ENCODE measurements at regions of chr10 and their contacts with region 1.

Region 1: GRCh38 chr10:70363971-70364771 is 18.3 kb downstream of the LRRC20 start:
- DNase-seq: peak; percentile 90
- ATAC-seq: peak; percentile 99
- H3K4me3 Mint-ChIP-seq: no peak overlapping the region
- H3K27ac Mint-ChIP-seq: no peak overlapping the region
- H3K4me1 Mint-ChIP-seq: peaks cover 9% of the 10 kb centered on the region
- H3K27me3 Mint-ChIP-seq: no peaks in the 10 kb centered on the region
- CTCF ChIP-seq: peak; percentile 87

Region 2: GRCh38 chr10:70192315-70192968 is 171.7 kb before region 1 on chr10:
- CTCF ChIA-PET with region 1: interaction called, 18 read pairs
- POLR2A ChIA-PET with region 1: no interaction called
- intact Hi-C with region 1: no loop called
- DNase-seq: no peak
- ATAC-seq: no peak
- H3K4me3 Mint-ChIP-seq: no peak overlapping the region
- H3K27ac Mint-ChIP-seq: no peak overlapping the region
- H3K4me1 Mint-ChIP-seq: peaks cover 6% of the 10 kb centered on the region
- H3K27me3 Mint-ChIP-seq: no peaks in the 10 kb centered on the region
- CTCF ChIP-seq: no peak

Region 3: GRCh38 chr10:70221030-70221429 is 143.1 kb before region 1 on chr10:
- CTCF ChIA-PET with region 1: interaction called, 321 read pairs
- POLR2A ChIA-PET with region 1: interaction called, 15 read pairs
- intact Hi-C with region 1: loop called (anchors 1 kb)
- DNase-seq: no peak
- ATAC-seq: no peak
- H3K4me3 Mint-ChIP-seq: no peak overlapping the region
- H3K27ac Mint-ChIP-seq: peak overlapping the region; percentile 47
- H3K4me1 Mint-ChIP-seq: peaks cover 31% of the 10 kb centered on the region
- H3K27me3 Mint-ChIP-seq: no peaks in the 10 kb centered on the region
- CTCF ChIP-seq: no peak

Region 4: DNA sequence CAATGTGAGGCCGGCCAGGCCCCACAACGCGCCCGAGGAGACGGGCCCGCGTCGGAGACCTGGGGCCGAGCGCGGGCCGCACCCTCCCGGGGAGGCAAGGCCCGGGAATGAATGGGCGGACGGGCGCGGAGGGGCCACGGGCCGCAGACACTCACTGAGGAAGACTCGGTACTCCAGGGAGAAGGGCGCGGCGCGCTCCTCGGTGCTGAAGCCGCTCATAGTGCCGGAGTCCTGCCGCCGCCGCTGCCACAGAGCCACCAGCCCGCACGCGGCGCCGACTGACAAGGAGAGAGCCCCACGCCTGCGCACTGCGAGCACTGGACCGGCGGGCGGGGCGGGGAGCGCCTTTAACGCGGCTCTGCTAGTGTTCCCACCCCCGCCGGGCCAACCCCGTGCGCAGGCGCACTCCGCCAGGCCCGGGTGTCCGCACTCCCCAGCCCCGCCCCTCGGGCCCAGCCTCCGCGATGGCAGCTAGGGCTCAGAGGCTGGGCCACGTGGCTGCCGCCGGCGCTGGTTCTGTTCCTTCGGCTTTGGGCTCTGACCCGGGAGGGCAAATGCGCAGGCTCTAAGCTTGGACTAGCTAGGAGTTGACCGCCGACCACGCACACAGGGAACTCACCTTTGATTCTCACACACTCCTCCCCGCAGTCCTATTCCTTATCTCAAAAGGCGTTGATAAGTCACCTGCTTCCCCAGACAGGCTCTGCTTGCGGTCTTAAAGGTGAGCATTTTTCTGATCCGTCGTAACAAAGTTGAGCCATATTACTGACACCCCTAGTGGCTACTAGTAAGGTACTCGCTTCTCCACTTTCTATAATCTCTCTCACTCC is 130.8 kb before region 1 on chr10 and contains the start of gene PPA1:
- CTCF ChIA-PET with region 1: interaction called, 321 read pairs
- POLR2A ChIA-PET with region 1: interaction called, 10 read pairs
- intact Hi-C with region 1: no loop called
- DNase-seq: peak; percentile 99
- ATAC-seq: peak; percentile 94
- H3K4me3 Mint-ChIP-seq: peak within 1 kb of the TSS; percentile 80
- H3K27ac Mint-ChIP-seq: peak within 1 kb of the TSS; percentile 94
- H3K4me1 Mint-ChIP-seq: peaks cover 42% of the 10 kb centered on the region
- H3K27me3 Mint-ChIP-seq: no peaks in the 10 kb centered on the region
- CTCF ChIP-seq: no peak
- total RNA-seq, gene PPA1: 357 to 368 TPM

Region 5: DNA sequence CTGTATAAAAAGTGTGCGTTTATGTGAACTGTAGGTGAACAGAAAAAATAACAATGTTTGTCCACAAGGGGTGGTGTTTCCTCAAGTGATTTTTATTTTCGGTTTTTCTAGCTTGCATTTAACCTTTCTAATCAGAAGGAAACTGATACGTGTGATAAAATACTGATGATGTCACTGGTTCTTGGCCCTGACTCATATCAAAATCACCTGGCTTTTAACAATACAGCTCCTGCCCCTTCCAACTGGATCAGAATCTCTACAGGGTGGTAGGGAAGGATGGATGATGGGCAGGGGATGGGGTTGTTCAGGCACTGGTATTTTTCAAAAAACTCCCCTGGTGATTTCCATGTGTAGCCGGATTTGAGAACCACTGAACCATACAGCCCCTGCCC is 91.2 kb before region 1 on chr10:
- CTCF ChIA-PET with region 1: interaction called, 48 read pairs
- POLR2A ChIA-PET with region 1: no interaction called
- intact Hi-C with region 1: no loop called
- DNase-seq: peak; percentile 20
- ATAC-seq: peak; percentile 91
- H3K4me3 Mint-ChIP-seq: no peak overlapping the region
- H3K27ac Mint-ChIP-seq: peak overlapping the region; percentile 52
- H3K4me1 Mint-ChIP-seq: peaks cover 14% of the 10 kb centered on the region
- H3K27me3 Mint-ChIP-seq: no peaks in the 10 kb centered on the region
- CTCF ChIP-seq: peak; percentile 72

Region 6: DNA sequence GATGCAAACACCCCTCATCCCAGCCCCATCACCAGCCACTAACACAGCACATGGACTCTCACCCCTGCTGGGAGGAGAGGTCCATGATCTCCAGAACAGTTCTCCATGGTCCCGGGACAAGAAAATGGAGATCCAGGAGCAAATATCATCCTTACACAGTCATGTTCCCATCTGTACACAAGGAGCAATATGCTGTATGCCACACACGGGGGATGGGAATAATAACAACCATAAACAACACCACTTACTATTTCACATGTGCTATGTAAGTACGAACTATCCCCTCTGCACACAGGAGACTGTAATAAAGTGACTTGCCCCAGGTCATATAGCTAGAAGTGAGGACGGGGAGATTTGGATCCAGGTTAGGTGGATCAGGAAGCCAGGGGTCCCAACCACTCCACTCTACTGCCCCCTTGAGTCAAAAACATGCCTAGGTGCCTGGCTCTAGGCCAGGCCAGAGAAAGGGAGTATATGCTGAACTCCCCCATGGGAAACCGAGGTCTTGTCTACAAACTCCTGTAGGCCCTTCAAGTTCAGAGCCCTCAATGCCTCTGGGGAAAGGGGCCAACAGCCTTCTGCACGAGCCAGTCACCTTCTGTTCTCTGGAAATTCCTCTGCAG is 15.8 kb before region 1 on chr10:
- CTCF ChIA-PET with region 1: interaction called, 43 read pairs
- POLR2A ChIA-PET with region 1: no interaction called
- intact Hi-C with region 1: no loop called
- DNase-seq: peak; percentile 63
- ATAC-seq: peak; percentile 87
- H3K4me3 Mint-ChIP-seq: no peak overlapping the region
- H3K27ac Mint-ChIP-seq: no peak overlapping the region
- H3K4me1 Mint-ChIP-seq: no peaks in the 10 kb centered on the region
- H3K27me3 Mint-ChIP-seq: no peaks in the 10 kb centered on the region
- CTCF ChIP-seq: peak; percentile 58

Region 7: GRCh38 chr10:70404036-70404786 is 40.0 kb after region 1 on chr10 and contains the start of gene EIF4EBP2:
- CTCF ChIA-PET with region 1: interaction called, 26 read pairs
- POLR2A ChIA-PET with region 1: no interaction called
- intact Hi-C with region 1: no loop called
- DNase-seq: peak; percentile 98
- ATAC-seq: peak; percentile 96
- H3K4me3 Mint-ChIP-seq: peak within 1 kb of the TSS; percentile 92
- H3K27ac Mint-ChIP-seq: peak within 1 kb of the TSS; percentile 91
- H3K4me1 Mint-ChIP-seq: peaks cover 36% of the 10 kb centered on the region
- H3K27me3 Mint-ChIP-seq: no peaks in the 10 kb centered on the region
- CTCF ChIP-seq: no peak
- total RNA-seq, gene EIF4EBP2: 23.5 to 24.0 TPM

Measured in activated CD8-positive, alpha-beta T cell treated with anti-CD3 and anti-CD28 coated beads for 36 hours (primary cell).